ENCODE measurements at regions of chr5 and their contacts with region 1.

Region 1: GRCh38 chr5:115309751-115310370 is 13.4 kb upstream of the CCDC112 start:
- DNase-seq: no peak
- CTCF ChIP-seq: peak; percentile 14

Region 2: GRCh38 chr5:114857941-114858551 is 451.8 kb before region 1 on chr5:
- in situ Hi-C with region 1: no loop called
- DNase-seq: no peak
- CTCF ChIP-seq: no peak

Region 3: GRCh38 chr5:115586601-115587048 is 276.8 kb after region 1 on chr5:
- in situ Hi-C with region 1: loop called (anchors 25 kb)
- DNase-seq: no peak
- CTCF ChIP-seq: peak; percentile 25

Region 4: DNA sequence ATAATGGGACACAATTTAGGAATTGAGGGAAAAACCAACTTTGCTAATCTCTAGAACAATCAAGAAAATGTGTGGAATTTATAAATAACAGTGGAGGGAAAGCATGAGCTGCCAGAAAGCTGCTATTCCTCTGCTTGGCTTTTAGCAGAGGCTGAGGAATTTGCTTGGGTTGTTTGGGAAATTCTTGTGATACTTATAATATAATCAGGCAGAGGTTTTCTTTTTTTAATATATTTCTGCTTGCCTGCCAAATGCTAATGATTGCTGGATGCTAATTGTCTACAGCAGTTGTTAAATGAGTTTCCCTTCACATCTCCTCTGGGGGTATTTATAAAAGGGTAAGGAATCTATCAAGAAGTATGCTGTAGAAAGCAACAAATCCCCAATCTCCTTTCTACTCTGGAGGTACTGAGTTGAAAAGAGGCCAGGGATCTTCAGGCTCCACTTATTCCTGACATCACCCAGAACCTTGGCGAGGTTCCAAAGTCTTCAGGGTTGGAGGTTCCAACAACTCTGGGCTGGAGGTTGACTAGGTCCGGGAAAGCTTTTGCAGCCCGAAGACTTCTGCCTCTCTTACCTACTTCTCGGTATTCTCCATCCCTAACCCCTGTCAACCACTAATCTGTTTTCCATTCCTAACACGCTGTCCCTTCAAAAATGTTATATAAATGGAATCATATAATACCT is 376.3 kb after region 1 on chr5:
- in situ Hi-C with region 1: no loop called
- DNase-seq: no peak
- CTCF ChIP-seq: no peak

Region 5: GRCh38 chr5:115841382-115842088 is 531.7 kb after region 1 on chr5 and contains the starts of genes AP3S1 and ATG12:
- in situ Hi-C with region 1: loop called (anchors 25 kb)
- DNase-seq: peak; percentile 90
- CTCF ChIP-seq: no peak

Region 6: DNA sequence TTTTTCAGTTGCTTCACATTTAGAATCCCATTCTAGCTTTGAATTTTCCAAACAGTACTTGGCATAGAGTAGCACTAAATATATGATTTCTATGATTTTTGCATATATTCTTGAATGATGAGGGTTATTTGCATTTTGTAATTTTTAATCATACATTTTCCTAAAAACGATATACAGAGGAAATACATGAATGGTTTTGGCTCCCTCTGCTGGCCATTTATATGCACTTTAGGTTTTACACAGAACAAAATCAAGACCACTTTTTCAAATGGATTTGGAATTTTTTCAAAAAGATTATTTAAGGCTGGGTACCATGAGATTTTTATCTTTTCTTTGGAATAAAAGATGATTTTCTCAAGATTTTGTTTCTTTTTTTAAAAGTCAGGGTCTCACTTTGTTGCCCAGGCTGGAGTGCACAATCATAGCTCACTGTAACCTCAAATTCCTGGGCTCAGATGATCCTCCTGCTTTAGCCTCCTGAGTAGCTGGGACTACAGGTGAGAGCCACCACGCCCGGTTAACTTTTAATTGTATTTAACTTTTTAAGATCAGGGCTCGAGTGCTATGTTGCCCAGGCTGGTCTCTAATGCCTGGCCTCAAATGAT is 758.3 kb after region 1 on chr5:
- in situ Hi-C with region 1: loop called (anchors 25 kb)
- DNase-seq: peak; percentile 40
- CTCF ChIP-seq: peak; percentile 42

Measured in GM13976 (cell line).